ENCODE measurements at regions of chr4 and their contacts with region 1.

Region 1: GRCh38 chr4:76179398-76180318 is 31.5 kb upstream of the NUP54 start:
- DNase-seq: peak; percentile 84
- H3K4me3 Mint-ChIP-seq: no peak overlapping the region
- H3K27ac Mint-ChIP-seq: no peak overlapping the region
- H3K4me1 Mint-ChIP-seq: no peaks in the 10 kb centered on the region
- H3K27me3 Mint-ChIP-seq: no peaks in the 10 kb centered on the region

Region 2: DNA sequence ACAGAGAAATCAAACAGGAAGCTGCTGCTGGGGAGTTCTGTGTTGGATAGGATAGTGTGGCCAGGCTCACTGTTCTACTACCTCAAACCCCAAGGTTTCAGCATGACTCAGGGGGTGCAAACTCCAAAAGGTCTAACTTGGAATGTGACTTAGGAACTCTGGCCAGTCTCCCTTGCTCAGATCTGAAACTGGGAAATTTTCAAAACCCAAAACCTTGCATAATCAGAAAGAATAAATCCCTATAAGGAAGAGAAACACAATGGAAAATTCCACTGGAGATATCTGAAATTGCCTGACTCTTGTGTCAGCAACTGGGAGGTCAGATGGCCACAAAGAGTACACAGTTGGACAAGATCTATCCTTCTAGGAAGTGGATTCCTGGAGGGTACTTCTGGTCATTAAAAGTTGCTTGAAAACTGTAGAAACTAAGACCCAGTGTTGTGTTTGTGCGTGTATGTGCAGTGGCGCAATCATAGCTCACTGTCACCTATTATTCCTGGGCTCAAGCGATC is 335.5 kb before region 1 on chr4:
- CTCF ChIA-PET with region 1: no interaction called
- POLR2A ChIA-PET with region 1: no interaction called
- DNase-seq: no peak
- H3K4me3 Mint-ChIP-seq: no peak overlapping the region
- H3K27ac Mint-ChIP-seq: no peak overlapping the region
- H3K4me1 Mint-ChIP-seq: peaks cover 12% of the 10 kb centered on the region
- H3K27me3 Mint-ChIP-seq: no peaks in the 10 kb centered on the region

Region 3: GRCh38 chr4:76168688-76169087 is 11.0 kb before region 1 on chr4:
- CTCF ChIA-PET with region 1: interaction called, 14 read pairs
- POLR2A ChIA-PET with region 1: no interaction called
- DNase-seq: no peak
- H3K4me3 Mint-ChIP-seq: no peak overlapping the region
- H3K27ac Mint-ChIP-seq: no peak overlapping the region
- H3K4me1 Mint-ChIP-seq: no peaks in the 10 kb centered on the region
- H3K27me3 Mint-ChIP-seq: no peaks in the 10 kb centered on the region

Region 4: GRCh38 chr4:76305971-76306881 is 126.6 kb after region 1 on chr4 and contains the start of gene STBD1:
- CTCF ChIA-PET with region 1: interaction called, 22 read pairs
- POLR2A ChIA-PET with region 1: interaction called, 5 read pairs
- DNase-seq: peak; percentile 55
- H3K4me3 Mint-ChIP-seq: peak within 1 kb of the TSS; percentile 78
- H3K27ac Mint-ChIP-seq: peak within 1 kb of the TSS; percentile 84
- H3K4me1 Mint-ChIP-seq: peaks cover 49% of the 10 kb centered on the region
- H3K27me3 Mint-ChIP-seq: no peaks in the 10 kb centered on the region
- total RNA-seq, gene STBD1: 5.5 to 5.8 TPM

Region 5: GRCh38 chr4:76430519-76431388 is 251.1 kb after region 1 on chr4:
- CTCF ChIA-PET with region 1: interaction called, 14 read pairs
- POLR2A ChIA-PET with region 1: no interaction called
- DNase-seq: no peak
- H3K4me3 Mint-ChIP-seq: no peak overlapping the region
- H3K27ac Mint-ChIP-seq: no peak overlapping the region
- H3K4me1 Mint-ChIP-seq: peaks cover 1% of the 10 kb centered on the region
- H3K27me3 Mint-ChIP-seq: peaks cover 23% of the 10 kb centered on the region

Region 6: DNA sequence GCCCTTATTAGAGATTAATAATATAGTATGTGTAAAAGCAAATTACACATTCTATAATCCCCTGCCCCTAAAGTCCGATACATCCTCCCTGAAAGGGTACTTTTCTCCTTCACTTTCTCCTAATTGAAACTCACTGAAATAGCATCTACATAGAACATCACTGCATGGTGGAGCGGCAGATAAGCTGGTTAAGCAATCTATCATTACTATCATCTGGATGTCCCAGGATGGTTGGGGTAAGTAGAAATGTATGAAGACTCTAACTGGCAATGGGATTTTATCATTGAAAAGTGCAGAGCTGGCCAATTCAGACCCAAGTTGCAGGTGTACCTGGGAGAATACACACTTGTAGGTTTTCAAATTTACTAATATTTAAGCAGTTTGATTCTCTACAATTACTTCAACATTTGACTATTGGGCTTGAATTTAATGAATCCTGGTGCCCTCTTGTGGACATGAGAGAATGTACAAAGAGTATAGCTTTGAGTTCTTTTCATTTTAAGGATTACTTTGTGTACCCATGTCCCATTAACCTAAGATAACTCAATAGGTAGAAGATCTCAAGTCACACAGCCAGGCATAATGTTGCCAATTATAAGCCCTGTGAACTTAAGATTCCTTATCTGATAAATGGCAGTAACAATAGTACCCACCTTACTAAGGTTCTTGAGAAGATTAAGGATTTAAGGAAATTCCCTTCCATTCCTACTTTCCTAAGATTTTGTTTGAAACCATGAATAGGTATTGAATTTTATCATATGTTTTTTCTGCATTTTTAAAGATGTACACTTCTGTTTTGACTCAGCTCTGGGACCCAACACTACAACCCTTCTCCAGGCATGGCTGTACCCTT is 325.2 kb after region 1 on chr4:
- CTCF ChIA-PET with region 1: interaction called, 24 read pairs
- POLR2A ChIA-PET with region 1: no interaction called
- DNase-seq: no peak
- H3K4me3 Mint-ChIP-seq: no peak overlapping the region
- H3K27ac Mint-ChIP-seq: no peak overlapping the region
- H3K4me1 Mint-ChIP-seq: no peaks in the 10 kb centered on the region
- H3K27me3 Mint-ChIP-seq: peaks cover 14% of the 10 kb centered on the region